ENCODE measurements at regions of chr11 and their contacts with region 1.

Region 1: DNA sequence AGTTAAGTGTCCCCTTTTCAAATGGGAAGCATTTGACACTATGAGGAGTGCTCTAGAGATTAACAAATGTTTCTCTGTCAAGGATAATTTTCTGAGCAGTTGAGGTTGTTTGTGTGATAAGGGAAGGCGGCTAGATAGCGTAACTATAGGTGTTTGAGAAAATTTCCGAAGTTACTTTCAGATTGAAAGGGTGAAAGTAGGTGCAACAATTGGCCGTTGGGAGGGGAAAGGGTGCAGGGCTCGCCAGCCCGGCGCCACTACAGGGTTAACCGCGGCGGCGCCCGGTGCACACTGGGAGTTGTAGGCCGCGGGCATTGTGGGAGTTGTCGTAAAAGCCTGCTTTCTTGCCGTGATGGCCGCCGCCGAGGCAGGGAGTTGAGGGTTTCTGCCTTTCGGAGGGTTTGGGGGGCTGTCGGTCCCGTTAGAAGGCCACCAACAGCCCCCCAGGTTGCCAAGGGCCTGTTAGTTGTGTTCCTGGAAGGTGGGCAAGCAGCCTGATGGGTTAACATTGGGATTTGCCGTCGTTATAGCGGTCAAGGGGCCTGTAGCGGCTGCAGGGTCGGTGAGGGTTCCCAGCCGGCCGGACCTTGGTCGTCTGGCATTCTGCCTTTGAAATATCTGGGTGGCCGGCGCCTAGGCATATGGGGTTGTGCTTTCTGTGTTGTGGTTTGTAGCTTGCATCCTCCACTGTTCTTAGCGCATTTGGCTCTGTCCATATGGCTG is 36.5 kb upstream of the HSD17B12 start:
- DNase-seq: peak; percentile 72 to 91 (median 85)
- ATAC-seq: peak; percentile 99
- H3K4me3 ChIP-seq: peak overlapping the region; percentile 73 to 76
- H3K4me3 Mint-ChIP-seq: peak overlapping the region; percentile 84
- H3K27ac ChIP-seq: peak overlapping the region; percentile 52 to 66
- H3K27ac Mint-ChIP-seq: peak overlapping the region; percentile 91
- H3K4me1 ChIP-seq: peaks cover 8% of the 10 kb centered on the region
- H3K4me1 Mint-ChIP-seq: peaks cover 26% of the 10 kb centered on the region
- H3K27me3 ChIP-seq: no peaks in the 10 kb centered on the region
- H3K27me3 Mint-ChIP-seq: peaks cover 15% of the 10 kb centered on the region
- CTCF ChIP-seq: no peak

Region 2: GRCh38 chr11:43311791-43312607 is 332.1 kb before region 1 on chr11 and contains the start of gene API5:
- CTCF ChIA-PET with region 1: no interaction called
- POLR2A ChIA-PET with region 1: no interaction called
- intact Hi-C with region 1: loop called (anchors 1 to 5 kb)
- DNase-seq: peak; percentile 84 to 96 (median 93)
- ATAC-seq: peak; percentile 94
- H3K4me3 ChIP-seq: peak within 1 kb of the TSS; percentile 84 to 85
- H3K4me3 Mint-ChIP-seq: peak within 1 kb of the TSS; percentile 92
- H3K27ac ChIP-seq: peak within 1 kb of the TSS; percentile 64 to 75
- H3K27ac Mint-ChIP-seq: peak within 1 kb of the TSS; percentile 88
- H3K4me1 ChIP-seq: peaks cover 34% of the 10 kb centered on the region
- H3K4me1 Mint-ChIP-seq: peaks cover 50% of the 10 kb centered on the region
- H3K27me3 ChIP-seq: no peaks in the 10 kb centered on the region
- H3K27me3 Mint-ChIP-seq: no peaks in the 10 kb centered on the region
- CTCF ChIP-seq: peak; percentile 63
- total RNA-seq, gene API5: 78.4 to 80.6 TPM

Region 3: GRCh38 chr11:43680521-43681400 is 36.7 kb after region 1 on chr11 and contains the start of gene HSD17B12:
- CTCF ChIA-PET with region 1: no interaction called
- POLR2A ChIA-PET with region 1: no interaction called
- intact Hi-C with region 1: loop called (anchors 1 kb)
- DNase-seq: peak; percentile 98 to 100 (median 98)
- ATAC-seq: peak; percentile 94
- H3K4me3 ChIP-seq: peak within 1 kb of the TSS; percentile 84
- H3K4me3 Mint-ChIP-seq: peak within 1 kb of the TSS; percentile 89
- H3K27ac ChIP-seq: peak within 1 kb of the TSS; percentile 91 to 92
- H3K27ac Mint-ChIP-seq: peak within 1 kb of the TSS; percentile 98
- H3K4me1 ChIP-seq: peaks cover 15% of the 10 kb centered on the region
- H3K4me1 Mint-ChIP-seq: peaks cover 32% of the 10 kb centered on the region
- H3K27me3 ChIP-seq: no peaks in the 10 kb centered on the region
- H3K27me3 Mint-ChIP-seq: no peaks in the 10 kb centered on the region
- CTCF ChIP-seq: no peak
- total RNA-seq, gene HSD17B12: 13.8 to 14.0 TPM

Region 4: GRCh38 chr11:43833657-43834073 is 189.6 kb after region 1 on chr11:
- CTCF ChIA-PET with region 1: no interaction called
- POLR2A ChIA-PET with region 1: no interaction called
- intact Hi-C with region 1: no loop called
- DNase-seq: no peak
- ATAC-seq: no peak
- H3K4me3 ChIP-seq: no peak overlapping the region
- H3K4me3 Mint-ChIP-seq: no peak overlapping the region
- H3K27ac ChIP-seq: no peak overlapping the region
- H3K27ac Mint-ChIP-seq: no peak overlapping the region
- H3K4me1 ChIP-seq: no peaks in the 10 kb centered on the region
- H3K4me1 Mint-ChIP-seq: no peaks in the 10 kb centered on the region
- H3K27me3 ChIP-seq: no peaks in the 10 kb centered on the region
- H3K27me3 Mint-ChIP-seq: no peaks in the 10 kb centered on the region
- CTCF ChIP-seq: no peak

Region 5: DNA sequence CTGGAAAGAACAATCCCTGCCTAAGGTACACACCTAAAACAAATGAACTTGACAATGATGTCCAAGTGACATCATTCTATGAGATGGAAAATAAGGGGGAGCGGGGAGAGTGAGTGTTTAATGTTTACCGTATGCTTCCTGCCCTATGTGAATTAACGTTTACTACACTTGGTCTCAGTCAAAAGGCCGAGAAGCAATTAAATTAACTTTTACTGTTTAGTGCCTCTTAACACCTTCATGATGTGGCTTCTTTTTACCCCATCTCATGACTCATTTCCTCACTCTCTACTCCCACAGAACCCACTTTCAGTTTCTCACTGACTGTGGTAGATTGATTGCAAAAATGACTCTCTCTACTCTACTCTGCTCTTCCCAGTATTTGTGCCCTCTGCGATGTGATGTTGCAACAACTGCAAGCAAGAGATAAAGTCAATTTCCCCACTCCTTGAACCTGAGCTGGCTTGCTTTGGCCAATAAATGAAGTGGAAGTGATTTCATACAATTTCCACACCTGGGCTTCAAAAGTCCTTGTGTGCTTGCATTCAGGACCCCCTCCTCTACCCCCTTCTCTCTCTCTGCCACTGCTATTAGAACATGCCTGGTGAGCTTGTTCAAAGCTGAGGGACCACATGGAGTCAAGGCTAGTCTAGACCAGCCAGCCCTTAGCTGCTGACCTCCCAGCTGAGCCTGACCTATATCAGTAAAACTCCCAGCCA is 225.0 kb after region 1 on chr11:
- CTCF ChIA-PET with region 1: no interaction called
- POLR2A ChIA-PET with region 1: no interaction called
- intact Hi-C with region 1: loop called in 1 of 2 experiments (anchors 5 kb)
- DNase-seq: peak in 8 of 9 experiments; percentile 10 to 87 (median 32)
- ATAC-seq: peak; percentile 98
- H3K4me3 ChIP-seq: peak overlapping the region; percentile 0 to 4
- H3K4me3 Mint-ChIP-seq: peak overlapping the region; percentile 33
- H3K27ac ChIP-seq: peak overlapping the region in 1 of 2 experiments; percentile 82
- H3K27ac Mint-ChIP-seq: peak overlapping the region; percentile 76
- H3K4me1 ChIP-seq: peaks cover 16% of the 10 kb centered on the region
- H3K4me1 Mint-ChIP-seq: peaks cover 15% of the 10 kb centered on the region
- H3K27me3 ChIP-seq: no peaks in the 10 kb centered on the region
- H3K27me3 Mint-ChIP-seq: peaks cover 22% of the 10 kb centered on the region
- CTCF ChIP-seq: no peak

Region 6: DNA sequence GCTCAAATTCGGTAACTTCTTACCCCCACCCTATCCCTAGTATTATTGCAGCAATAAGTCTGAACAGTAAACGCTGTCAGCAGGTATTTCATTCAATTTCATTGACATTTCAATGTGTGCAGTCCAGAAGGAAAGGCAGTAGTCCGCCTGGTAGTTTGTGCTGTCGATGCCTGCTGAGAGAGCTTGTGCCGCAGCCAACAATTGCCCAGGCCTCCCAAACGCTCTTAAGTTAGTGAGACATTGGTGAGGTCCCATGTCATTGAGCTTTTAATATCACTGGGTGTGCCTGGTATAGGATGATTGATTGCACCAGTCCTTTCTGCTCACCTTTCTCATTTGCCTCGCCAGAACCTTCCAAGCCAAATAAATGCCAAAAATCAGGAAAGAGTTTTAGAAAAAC is 264.6 kb after region 1 on chr11:
- CTCF ChIA-PET with region 1: no interaction called
- POLR2A ChIA-PET with region 1: no interaction called
- intact Hi-C with region 1: no loop called
- DNase-seq: no peak
- ATAC-seq: no peak
- H3K4me3 ChIP-seq: no peak overlapping the region
- H3K4me3 Mint-ChIP-seq: no peak overlapping the region
- H3K27ac ChIP-seq: no peak overlapping the region
- H3K27ac Mint-ChIP-seq: no peak overlapping the region
- H3K4me1 ChIP-seq: no peaks in the 10 kb centered on the region
- H3K4me1 Mint-ChIP-seq: peaks cover 14% of the 10 kb centered on the region
- H3K27me3 ChIP-seq: no peaks in the 10 kb centered on the region
- H3K27me3 Mint-ChIP-seq: no peaks in the 10 kb centered on the region
- CTCF ChIP-seq: no peak

Region 7: GRCh38 chr11:44065841-44066731 is 422.0 kb after region 1 on chr11 and contains the start of gene ACCS:
- CTCF ChIA-PET with region 1: no interaction called
- POLR2A ChIA-PET with region 1: no interaction called
- intact Hi-C with region 1: loop called in 1 of 2 experiments (anchors 2 kb)
- DNase-seq: peak; percentile 80 to 96 (median 93)
- ATAC-seq: peak; percentile 96
- H3K4me3 ChIP-seq: peak within 1 kb of the TSS; percentile 80 to 83
- H3K4me3 Mint-ChIP-seq: peak within 1 kb of the TSS; percentile 91
- H3K27ac ChIP-seq: peak within 1 kb of the TSS; percentile 70 to 71
- H3K27ac Mint-ChIP-seq: peak within 1 kb of the TSS; percentile 92
- H3K4me1 ChIP-seq: peaks cover 6% of the 10 kb centered on the region
- H3K4me1 Mint-ChIP-seq: peaks cover 30% of the 10 kb centered on the region
- H3K27me3 ChIP-seq: no peaks in the 10 kb centered on the region
- H3K27me3 Mint-ChIP-seq: no peaks in the 10 kb centered on the region
- CTCF ChIP-seq: peak; percentile 83
- total RNA-seq, gene ACCS: 16.7 to 18.1 TPM

Measured in CD8-positive, alpha-beta T cell (primary cell).